CD4-positive, alpha-beta T cell (primary cell): ENCODE measurements at regions of chr6 and their contacts with region 1.

Region 1: DNA sequence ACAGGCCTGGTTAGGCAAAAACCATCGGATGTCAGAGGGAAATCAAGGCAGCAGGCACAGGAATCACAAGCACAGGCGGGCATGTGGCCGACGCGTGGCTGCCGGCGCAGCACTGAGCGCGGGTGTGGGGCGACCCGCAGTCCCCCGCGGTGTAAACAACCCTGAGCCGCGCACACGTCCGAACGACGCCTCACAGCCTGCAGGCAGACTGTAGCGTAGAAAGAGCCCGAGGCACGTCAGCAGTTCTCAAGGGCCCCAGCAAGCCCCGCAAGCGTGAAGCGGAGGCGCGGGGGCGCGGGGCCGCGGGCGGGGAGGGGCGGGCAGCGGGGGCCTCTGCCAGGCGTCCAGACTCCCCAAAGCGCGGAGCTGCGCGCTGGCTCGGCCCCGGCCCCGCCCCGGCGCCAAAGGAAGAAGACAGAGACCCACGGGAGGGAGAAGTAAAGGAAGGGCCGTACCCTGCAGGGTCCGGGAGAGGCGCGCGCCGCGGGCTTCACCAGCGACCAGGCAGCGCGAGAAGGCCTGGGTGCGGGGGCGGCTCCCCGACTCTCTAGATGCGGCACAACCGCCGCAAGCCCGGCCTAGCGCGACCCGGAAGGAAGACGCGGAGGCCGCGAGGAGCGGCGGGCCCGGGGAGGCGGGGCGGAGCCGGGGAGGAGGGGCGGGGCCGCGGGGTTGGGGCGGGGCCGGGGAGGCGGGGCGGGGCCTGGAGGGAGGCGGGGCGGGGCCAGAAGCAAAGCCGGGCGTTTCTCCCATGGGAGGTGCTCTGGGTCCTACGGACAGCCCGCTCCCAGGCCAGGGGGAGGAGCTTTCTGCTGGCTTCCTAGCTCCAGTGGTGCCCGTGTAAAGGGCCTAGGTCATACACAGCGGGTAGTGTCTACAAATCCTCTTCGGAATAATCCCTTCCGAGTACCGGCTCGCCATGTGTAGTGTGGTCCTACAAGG is at the start of gene FBXL4:
- DNase-seq: peak; percentile 53 to 90 (median 70)
- ATAC-seq: peak; percentile 80
- H3K4me3 ChIP-seq: peak within 1 kb of the TSS; percentile 86
- H3K4me3 Mint-ChIP-seq: peak within 1 kb of the TSS; percentile 95
- H3K27ac ChIP-seq: peak within 1 kb of the TSS; percentile 47 to 50
- H3K27ac Mint-ChIP-seq: peak within 1 kb of the TSS; percentile 89
- H3K4me1 ChIP-seq: peaks cover 15% of the 10 kb centered on the region
- H3K4me1 Mint-ChIP-seq: peaks cover 43% of the 10 kb centered on the region
- H3K27me3 ChIP-seq: no peaks in the 10 kb centered on the region
- H3K27me3 Mint-ChIP-seq: no peaks in the 10 kb centered on the region
- CTCF ChIP-seq: no peak
- total RNA-seq, gene FBXL4: 6.9 to 7.0 TPM

Region 2: GRCh38 chr6:97282726-97283617 is 1664.7 kb before region 1 on chr6 and contains the start of gene MMS22L:
- CTCF ChIA-PET with region 1: no interaction called
- POLR2A ChIA-PET with region 1: no interaction called
- intact Hi-C with region 1: loop called (anchors 5 kb)
- DNase-seq: peak; percentile 82 to 97 (median 90)
- ATAC-seq: peak; percentile 96
- H3K4me3 ChIP-seq: peak within 1 kb of the TSS; percentile 88
- H3K4me3 Mint-ChIP-seq: peak within 1 kb of the TSS; percentile 89
- H3K27ac ChIP-seq: peak within 1 kb of the TSS in 1 of 2 donors; percentile 38
- H3K27ac Mint-ChIP-seq: peak within 1 kb of the TSS; percentile 78
- H3K4me1 ChIP-seq: peaks cover 8% of the 10 kb centered on the region
- H3K4me1 Mint-ChIP-seq: peaks cover 28% of the 10 kb centered on the region
- H3K27me3 ChIP-seq: no peaks in the 10 kb centered on the region
- H3K27me3 Mint-ChIP-seq: no peaks in the 10 kb centered on the region
- CTCF ChIP-seq: no peak
- total RNA-seq, gene MMS22L: 5.3 to 5.8 TPM

Region 3: DNA sequence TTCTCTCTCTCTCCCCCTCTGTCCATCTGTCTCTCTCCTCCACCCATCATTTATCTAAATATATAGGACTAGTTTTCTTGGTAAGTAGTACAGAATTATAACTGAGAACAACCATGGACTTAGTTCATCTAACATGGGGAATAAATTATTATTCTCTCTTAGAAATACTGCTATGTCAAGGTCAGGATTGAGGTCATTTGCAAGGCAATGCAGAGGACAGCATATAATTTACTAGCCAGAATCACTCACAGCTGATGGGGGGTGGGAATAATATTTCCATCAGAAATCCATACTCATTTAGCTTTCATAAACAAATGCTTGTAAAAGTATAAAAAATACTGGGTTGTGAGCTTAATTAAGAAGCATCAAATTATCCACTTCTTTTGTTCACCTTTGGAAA is 667.1 kb before region 1 on chr6:
- CTCF ChIA-PET with region 1: no interaction called
- POLR2A ChIA-PET with region 1: no interaction called
- intact Hi-C with region 1: no loop called
- DNase-seq: no peak
- ATAC-seq: no peak
- H3K4me3 ChIP-seq: no peak overlapping the region
- H3K4me3 Mint-ChIP-seq: no peak overlapping the region
- H3K27ac ChIP-seq: no peak overlapping the region
- H3K27ac Mint-ChIP-seq: no peak overlapping the region
- H3K4me1 ChIP-seq: no peaks in the 10 kb centered on the region
- H3K4me1 Mint-ChIP-seq: no peaks in the 10 kb centered on the region
- H3K27me3 ChIP-seq: no peaks in the 10 kb centered on the region
- H3K27me3 Mint-ChIP-seq: no peaks in the 10 kb centered on the region
- CTCF ChIP-seq: no peak

Region 4: GRCh38 chr6:98834060-98835031 is 113.3 kb before region 1 on chr6 and contains the start of gene POU3F2:
- CTCF ChIA-PET with region 1: no interaction called
- POLR2A ChIA-PET with region 1: interaction called, 4 read pairs
- intact Hi-C with region 1: loop called in 1 of 2 experiments (anchors 5 kb)
- DNase-seq: peak; percentile 33 to 82 (median 55)
- ATAC-seq: peak; percentile 73
- H3K4me3 ChIP-seq: peak within 1 kb of the TSS; percentile 62
- H3K4me3 Mint-ChIP-seq: peak within 1 kb of the TSS; percentile 91
- H3K27ac ChIP-seq: no peak within 1 kb of the TSS
- H3K27ac Mint-ChIP-seq: no peak within 1 kb of the TSS
- H3K4me1 ChIP-seq: peaks cover 55% of the 10 kb centered on the region
- H3K4me1 Mint-ChIP-seq: peaks cover 41% of the 10 kb centered on the region
- H3K27me3 ChIP-seq: peaks cover 61 to 87% of the 10 kb centered on the region in 2 experiments
- H3K27me3 Mint-ChIP-seq: peaks cover 94% of the 10 kb centered on the region
- CTCF ChIP-seq: no peak
- total RNA-seq, gene POU3F2: not detected

Region 5: GRCh38 chr6:98904096-98904495 is 43.5 kb before region 1 on chr6:
- CTCF ChIA-PET with region 1: no interaction called
- POLR2A ChIA-PET with region 1: no interaction called
- intact Hi-C with region 1: no loop called
- DNase-seq: no peak
- ATAC-seq: no peak
- H3K4me3 ChIP-seq: no peak overlapping the region
- H3K4me3 Mint-ChIP-seq: no peak overlapping the region
- H3K27ac ChIP-seq: no peak overlapping the region
- H3K27ac Mint-ChIP-seq: no peak overlapping the region
- H3K4me1 ChIP-seq: no peaks in the 10 kb centered on the region
- H3K4me1 Mint-ChIP-seq: peaks cover 4% of the 10 kb centered on the region
- H3K27me3 ChIP-seq: no peaks in the 10 kb centered on the region
- H3K27me3 Mint-ChIP-seq: no peaks in the 10 kb centered on the region
- CTCF ChIP-seq: no peak

Region 6: GRCh38 chr6:100877851-100878250 is 1930.2 kb after region 1 on chr6:
- CTCF ChIA-PET with region 1: no interaction called
- POLR2A ChIA-PET with region 1: no interaction called
- intact Hi-C with region 1: loop called in 1 of 2 experiments (anchors 10 kb)
- DNase-seq: no peak
- ATAC-seq: no peak
- H3K4me3 ChIP-seq: no peak overlapping the region
- H3K4me3 Mint-ChIP-seq: peak overlapping the region; percentile 35
- H3K27ac ChIP-seq: no peak overlapping the region
- H3K27ac Mint-ChIP-seq: no peak overlapping the region
- H3K4me1 ChIP-seq: peaks cover 17% of the 10 kb centered on the region
- H3K4me1 Mint-ChIP-seq: peaks cover 90% of the 10 kb centered on the region
- H3K27me3 ChIP-seq: no peaks in the 10 kb centered on the region
- H3K27me3 Mint-ChIP-seq: no peaks in the 10 kb centered on the region
- CTCF ChIP-seq: no peak